AG04449 (cell line): ENCODE measurements at regions of chr14 and their contacts with region 1.

Region 1: GRCh38 chr14:93132470-93133065 is 16.8 kb upstream of the ITPK1 start:
- DNase-seq: no peak
- H3K4me3 ChIP-seq: no peak overlapping the region
- CTCF ChIP-seq: peak; percentile 39

Region 2: DNA sequence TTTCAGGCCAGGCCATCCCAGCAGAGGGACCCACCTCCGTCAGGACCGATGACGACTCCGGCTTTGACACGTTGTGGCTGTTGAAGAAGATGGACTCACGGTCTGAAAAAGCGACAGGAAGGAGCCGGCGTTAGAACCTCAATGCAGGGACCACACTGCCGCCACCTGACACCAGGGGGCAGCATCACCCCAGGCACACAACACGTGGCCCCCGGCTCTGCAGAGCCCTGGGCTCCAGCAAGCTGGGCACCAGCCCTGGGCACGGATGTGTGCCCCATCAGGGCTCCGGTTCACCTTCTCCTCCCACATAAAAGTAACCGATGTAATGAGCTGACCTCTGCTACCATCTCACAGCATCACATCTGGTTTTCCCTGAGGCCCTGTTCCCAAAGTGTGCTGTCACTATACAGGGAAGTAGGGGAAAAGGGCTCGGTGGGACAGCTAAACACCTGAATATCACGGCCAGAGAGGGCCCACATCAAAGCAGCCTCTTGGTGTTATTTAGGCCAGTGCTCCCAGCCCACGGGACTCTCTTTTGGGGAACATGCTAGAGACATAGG is 180.6 kb before region 1 on chr14:
- CTCF ChIA-PET with region 1: interaction called, 135 read pairs
- POLR2A ChIA-PET with region 1: no interaction called
- DNase-seq: no peak
- H3K4me3 ChIP-seq: no peak overlapping the region
- CTCF ChIP-seq: peak; percentile 97

Region 3: GRCh38 chr14:92960711-92961549 is 171.6 kb before region 1 on chr14:
- CTCF ChIA-PET with region 1: interaction called, 135 read pairs
- POLR2A ChIA-PET with region 1: no interaction called
- DNase-seq: no peak
- H3K4me3 ChIP-seq: no peak overlapping the region
- CTCF ChIP-seq: no peak

Region 4: GRCh38 chr14:93120517-93120916 is 12.1 kb before region 1 on chr14:
- CTCF ChIA-PET with region 1: interaction called, 326 read pairs
- POLR2A ChIA-PET with region 1: no interaction called
- DNase-seq: no peak
- H3K4me3 ChIP-seq: no peak overlapping the region
- CTCF ChIP-seq: no peak

Region 5: DNA sequence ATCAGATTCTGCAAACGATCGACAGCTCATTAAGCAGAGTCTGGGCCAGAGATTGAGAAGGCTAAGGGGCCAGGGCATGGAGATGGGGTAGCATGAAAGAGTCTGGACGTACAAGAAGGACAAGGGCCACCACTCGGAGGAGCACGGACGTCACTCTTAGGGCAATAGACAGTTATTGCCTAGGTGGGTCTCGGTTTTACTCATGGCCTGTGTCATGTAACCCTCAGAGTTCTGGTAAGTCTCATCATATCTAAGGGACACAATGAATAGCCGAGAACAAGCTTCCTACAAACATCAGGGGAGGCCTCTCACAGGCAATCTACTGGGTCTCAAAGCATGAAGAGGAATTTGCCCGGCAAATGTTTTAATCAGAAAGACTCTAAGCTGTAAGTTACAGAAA is 13.6 kb after region 1 on chr14:
- CTCF ChIA-PET with region 1: interaction called, 20 read pairs
- POLR2A ChIA-PET with region 1: no interaction called
- DNase-seq: no peak
- H3K4me3 ChIP-seq: no peak overlapping the region
- CTCF ChIP-seq: no peak

Region 6: GRCh38 chr14:93173943-93174395 is 41.4 kb after region 1 on chr14:
- CTCF ChIA-PET with region 1: interaction called, 10 read pairs
- POLR2A ChIA-PET with region 1: no interaction called
- DNase-seq: no peak
- H3K4me3 ChIP-seq: no peak overlapping the region
- CTCF ChIP-seq: no peak

Region 7: DNA sequence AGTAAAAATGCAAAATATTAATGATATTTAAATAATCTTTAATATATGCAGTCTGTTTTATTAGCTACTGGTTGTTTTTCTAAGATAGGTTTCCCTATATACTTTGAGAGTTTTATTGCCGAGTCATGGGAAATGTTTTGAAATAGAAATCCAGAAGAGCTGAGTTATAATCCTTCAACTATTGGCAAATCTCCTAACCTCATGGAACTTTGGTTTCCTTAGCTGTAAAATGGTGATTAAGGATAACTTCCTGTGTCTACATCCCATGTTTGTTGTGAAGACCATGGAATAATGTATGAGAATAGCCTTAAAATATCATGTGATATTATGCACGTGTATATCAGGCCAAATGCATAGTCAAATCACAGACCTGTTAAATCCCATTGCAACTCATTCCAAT is 349.2 kb after region 1 on chr14:
- CTCF ChIA-PET with region 1: no interaction called
- POLR2A ChIA-PET with region 1: no interaction called
- DNase-seq: no peak
- H3K4me3 ChIP-seq: no peak overlapping the region
- CTCF ChIP-seq: no peak